ENCODE measurements at regions of chr22 and their contacts with region 1.

Region 1: GRCh38 chr22:36123673-36124630 is 36.6 kb downstream of the APOL3 start:
- DNase-seq: peak; percentile 94
- ATAC-seq: peak; percentile 100
- H3K4me3 Mint-ChIP-seq: peak overlapping the region; percentile 67
- H3K27ac Mint-ChIP-seq: peak overlapping the region; percentile 92
- H3K4me1 Mint-ChIP-seq: peaks cover 11% of the 10 kb centered on the region
- H3K27me3 Mint-ChIP-seq: no peaks in the 10 kb centered on the region
- CTCF ChIP-seq: peak; percentile 96

Region 2: GRCh38 chr22:35627264-35628041 is 496.5 kb before region 1 on chr22:
- CTCF ChIA-PET with region 1: interaction called, 4 read pairs
- POLR2A ChIA-PET with region 1: no interaction called
- intact Hi-C with region 1: loop called (anchors 10 kb)
- DNase-seq: peak; percentile 87
- ATAC-seq: peak; percentile 69
- H3K4me3 Mint-ChIP-seq: peak overlapping the region; percentile 78
- H3K27ac Mint-ChIP-seq: peak overlapping the region; percentile 86
- H3K4me1 Mint-ChIP-seq: peaks cover 26% of the 10 kb centered on the region
- H3K27me3 Mint-ChIP-seq: peaks cover 7% of the 10 kb centered on the region
- CTCF ChIP-seq: peak; percentile 58

Region 3: GRCh38 chr22:36088292-36088691 is 35.7 kb before region 1 on chr22:
- CTCF ChIA-PET with region 1: no interaction called
- POLR2A ChIA-PET with region 1: no interaction called
- intact Hi-C with region 1: no loop called
- DNase-seq: no peak
- ATAC-seq: no peak
- H3K4me3 Mint-ChIP-seq: no peak overlapping the region
- H3K27ac Mint-ChIP-seq: no peak overlapping the region
- H3K4me1 Mint-ChIP-seq: no peaks in the 10 kb centered on the region
- H3K27me3 Mint-ChIP-seq: no peaks in the 10 kb centered on the region
- CTCF ChIP-seq: no peak

Region 4: DNA sequence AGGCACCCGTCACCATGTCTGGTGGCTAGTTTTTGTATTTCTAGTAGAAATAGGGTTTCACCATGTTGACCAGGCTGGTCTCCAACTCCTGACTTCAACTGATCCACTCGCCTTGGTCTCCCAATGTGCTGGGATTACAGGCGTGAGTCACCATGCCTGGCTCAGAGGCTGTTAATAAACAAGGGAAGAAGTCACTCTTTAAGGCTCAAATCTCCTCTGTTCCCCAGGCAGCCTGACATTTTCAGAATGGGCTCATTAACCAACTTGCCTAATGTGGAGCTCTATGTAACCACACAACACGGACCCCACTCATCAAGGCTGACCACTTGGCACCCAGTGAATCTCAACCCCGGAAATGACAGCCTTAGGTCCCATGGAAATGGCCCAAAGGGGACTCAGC is 12.5 kb after region 1 on chr22:
- CTCF ChIA-PET with region 1: interaction called, 24 read pairs
- POLR2A ChIA-PET with region 1: interaction called, 4 read pairs
- intact Hi-C with region 1: no loop called
- DNase-seq: no peak
- ATAC-seq: no peak
- H3K4me3 Mint-ChIP-seq: no peak overlapping the region
- H3K27ac Mint-ChIP-seq: no peak overlapping the region
- H3K4me1 Mint-ChIP-seq: peaks cover 17% of the 10 kb centered on the region
- H3K27me3 Mint-ChIP-seq: no peaks in the 10 kb centered on the region
- CTCF ChIP-seq: no peak

Region 5: DNA sequence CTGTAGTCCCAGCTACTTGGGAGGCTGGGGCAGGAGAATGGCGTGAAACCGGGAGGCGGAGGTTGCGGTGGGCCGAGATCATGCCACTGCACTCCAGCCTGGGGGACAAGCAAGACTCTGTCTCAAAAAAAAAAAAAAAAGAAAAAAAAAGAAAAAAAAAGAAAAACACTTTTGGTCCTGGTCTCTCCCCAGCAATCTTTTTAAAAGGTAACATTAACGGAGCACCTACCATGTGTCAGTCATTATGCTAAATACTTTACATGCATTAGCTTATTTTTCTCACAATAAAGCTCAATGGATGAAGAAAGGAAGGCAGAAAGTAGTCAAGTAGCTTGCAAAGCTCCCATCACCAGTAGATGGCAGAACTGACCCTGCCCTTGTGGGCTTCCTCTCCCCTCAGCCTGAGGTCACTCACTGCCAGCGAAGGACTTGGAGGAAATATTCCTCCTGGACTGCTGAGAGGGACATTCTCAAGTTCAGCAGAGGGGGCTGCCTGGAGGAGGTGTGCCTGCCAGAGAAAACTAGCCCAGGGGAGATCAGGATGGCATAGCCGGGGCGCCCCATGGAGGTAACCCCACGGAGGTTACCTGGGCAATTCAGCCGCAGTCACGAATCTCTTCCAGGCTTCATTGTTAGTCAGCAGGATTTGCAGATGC is 21.1 kb after region 1 on chr22:
- CTCF ChIA-PET with region 1: interaction called, 13 read pairs
- POLR2A ChIA-PET with region 1: no interaction called
- intact Hi-C with region 1: no loop called
- DNase-seq: peak; percentile 63
- ATAC-seq: peak; percentile 78
- H3K4me3 Mint-ChIP-seq: no peak overlapping the region
- H3K27ac Mint-ChIP-seq: no peak overlapping the region
- H3K4me1 Mint-ChIP-seq: peaks cover 24% of the 10 kb centered on the region
- H3K27me3 Mint-ChIP-seq: no peaks in the 10 kb centered on the region
- CTCF ChIP-seq: peak; percentile 80

Measured in activated CD8-positive, alpha-beta T cell treated with anti-CD3 and anti-CD28 coated beads for 36 hours (primary cell).